A549 (cell line): ENCODE measurements at regions of chr13 and their contacts with region 1.

Region 1: DNA sequence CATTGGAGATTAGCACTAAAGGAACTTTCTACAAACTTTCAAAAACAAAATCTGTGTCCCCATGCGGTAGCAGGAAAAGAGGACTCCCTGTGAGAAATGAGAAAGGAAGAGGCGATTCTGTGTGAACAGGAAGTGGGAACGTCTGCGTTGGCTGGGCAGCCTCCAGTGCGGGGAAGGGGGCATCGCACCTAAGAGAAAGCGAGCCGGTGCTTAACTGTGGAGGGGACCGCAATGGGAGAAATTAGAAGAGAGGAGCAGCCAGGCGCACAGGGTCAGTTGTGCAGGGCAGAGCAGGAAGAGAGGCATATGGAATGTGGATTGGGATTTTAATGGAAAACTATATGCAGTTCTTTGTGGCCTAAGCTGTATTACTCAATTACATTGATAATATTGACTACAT is 77.4 kb upstream of the DOCK9 start:
- DNase-seq: no peak
- ATAC-seq: no peak
- H3K4me3 ChIP-seq: no peak overlapping the region
- H3K27ac ChIP-seq: peak overlapping the region; percentile 90 to 97
- H3K4me1 ChIP-seq: peaks cover 58% of the 10 kb centered on the region
- CTCF ChIP-seq: no peak
- EP300 ChIP-seq: no peak
- POLR2A ChIP-seq: no peak
- RAD21 ChIP-seq: no peak

Region 2: DNA sequence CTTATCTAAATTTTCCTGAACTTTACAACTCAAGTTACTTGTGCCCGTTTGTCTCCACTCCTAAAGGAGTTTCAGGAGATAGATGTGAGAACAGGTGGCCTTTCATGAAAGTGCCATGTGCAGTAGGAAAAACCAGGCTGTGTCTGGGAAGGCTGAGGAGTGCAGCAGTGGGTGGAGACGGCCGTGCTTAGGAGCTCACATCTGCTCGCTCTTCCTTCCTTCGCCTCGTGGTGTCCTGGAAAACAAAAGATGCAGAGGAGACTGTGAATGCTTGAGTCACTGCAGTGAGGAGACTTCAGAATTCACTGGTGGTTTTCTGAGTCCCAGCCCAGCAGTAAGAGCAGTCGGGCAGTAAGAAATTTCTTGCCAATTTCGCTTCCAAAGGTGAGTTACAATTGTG is 739.8 kb before region 1 on chr13:
- CTCF ChIA-PET with region 1: no interaction called
- POLR2A ChIA-PET with region 1: no interaction called
- DNase-seq: no peak
- ATAC-seq: no peak
- H3K4me3 ChIP-seq: no peak overlapping the region
- H3K27ac ChIP-seq: no peak overlapping the region
- H3K4me1 ChIP-seq: 0 out of 3 replicates have a peak, but pooled peaks cover 9% of the 10 kb centered on the region
- CTCF ChIP-seq: no peak
- EP300 ChIP-seq: no peak
- POLR2A ChIP-seq: no peak
- RAD21 ChIP-seq: no peak

Region 3: DNA sequence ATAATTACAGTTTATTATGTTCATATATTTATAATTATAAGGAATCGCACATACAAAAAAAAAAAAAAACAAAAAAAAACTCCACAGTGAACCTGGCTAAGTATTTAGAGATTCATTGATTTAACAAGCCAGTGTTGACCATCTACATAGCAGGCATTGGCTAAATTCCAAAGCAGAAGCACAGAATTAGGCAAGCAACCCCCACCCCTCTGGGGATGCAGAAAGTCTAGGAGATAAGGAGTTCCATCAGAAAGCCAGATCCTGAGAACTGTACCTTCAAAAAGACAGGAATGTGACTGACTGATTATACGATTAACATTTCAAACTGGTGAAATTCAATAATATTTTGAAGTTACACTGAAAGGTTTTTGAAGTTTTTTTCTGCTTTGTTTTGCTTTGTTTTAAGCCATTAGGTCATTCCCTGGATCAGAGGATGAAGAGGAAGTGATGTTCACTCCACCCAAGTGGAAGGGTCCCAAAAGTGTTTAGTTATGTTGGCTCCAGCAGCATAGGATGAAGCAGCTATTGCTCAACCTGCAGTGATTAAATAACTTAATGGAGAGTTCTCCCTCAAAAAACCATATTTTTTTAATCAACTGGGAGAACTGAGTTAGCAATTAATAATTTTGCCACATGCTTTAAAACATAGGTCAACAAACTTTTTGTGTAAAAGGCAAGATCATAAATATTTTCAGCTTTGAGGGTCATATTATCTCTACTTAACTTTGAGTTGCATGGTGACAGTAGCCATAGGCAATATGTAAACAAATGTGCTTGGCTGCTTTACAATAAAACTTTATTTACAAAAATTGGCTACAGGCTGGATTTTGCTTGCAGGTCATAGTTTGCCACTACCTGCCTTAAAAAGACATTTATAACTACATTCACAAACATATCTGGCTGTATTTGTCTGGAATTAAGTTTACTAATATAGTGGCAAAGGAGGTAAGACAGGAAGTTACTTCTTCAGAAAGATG is 127.0 kb before region 1 on chr13:
- CTCF ChIA-PET with region 1: no interaction called
- POLR2A ChIA-PET with region 1: no interaction called
- DNase-seq: no peak
- ATAC-seq: no peak
- H3K4me3 ChIP-seq: no peak overlapping the region
- H3K27ac ChIP-seq: no peak overlapping the region
- H3K4me1 ChIP-seq: peaks cover 8% of the 10 kb centered on the region
- CTCF ChIP-seq: no peak
- EP300 ChIP-seq: no peak
- POLR2A ChIP-seq: no peak
- RAD21 ChIP-seq: no peak

Region 4: DNA sequence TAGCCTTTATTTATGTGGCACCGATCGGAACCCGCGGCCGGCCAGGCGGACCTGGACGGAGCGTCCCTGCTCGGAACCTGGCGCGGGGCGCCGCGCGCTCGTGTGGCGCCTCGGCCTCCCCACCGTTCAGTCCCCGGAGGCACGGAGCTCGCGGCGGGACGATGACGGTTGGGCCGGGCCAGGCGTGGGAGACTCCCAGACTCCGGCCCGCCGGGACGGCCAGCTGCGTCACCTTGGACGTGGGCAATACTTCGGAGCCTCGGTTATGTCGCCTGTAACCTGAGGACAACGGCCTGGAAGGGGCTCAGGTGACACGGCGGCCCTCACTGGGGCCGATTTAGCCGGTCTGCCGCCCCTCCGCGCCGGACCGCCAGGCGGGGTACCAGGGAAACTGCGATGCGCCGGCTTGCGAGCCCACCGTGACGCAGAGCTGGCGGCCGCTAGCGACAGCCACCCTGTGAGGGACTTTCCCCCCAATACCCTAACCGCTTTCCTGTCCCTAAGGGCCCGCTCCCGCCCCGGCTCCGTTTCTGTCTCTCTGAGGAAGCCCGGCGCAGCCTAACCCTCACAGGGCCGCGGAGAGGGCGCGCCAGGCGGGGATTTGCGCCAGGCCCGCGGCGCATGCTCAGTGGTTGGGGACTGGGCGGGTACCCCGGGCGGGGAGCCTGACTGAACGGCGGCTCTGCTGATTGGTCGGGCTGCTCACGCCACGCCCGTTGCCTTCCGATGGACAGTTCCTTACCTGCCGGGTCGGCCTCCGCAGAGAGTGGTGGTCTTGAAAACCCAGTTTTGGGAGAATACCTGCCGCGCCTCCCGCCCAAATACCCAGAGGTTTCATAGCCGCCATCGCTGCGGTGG is 32.0 kb after region 1 on chr13:
- CTCF ChIA-PET with region 1: interaction called, 7 read pairs
- POLR2A ChIA-PET with region 1: interaction called, 10 read pairs
- DNase-seq: peak; percentile 86 to 93
- ATAC-seq: peak; percentile 86 to 96
- H3K4me3 ChIP-seq: peak overlapping the region; percentile 87
- H3K27ac ChIP-seq: peak overlapping the region; percentile 93 to 96
- H3K4me1 ChIP-seq: peaks cover 13% of the 10 kb centered on the region; the same call in 1 of the 3 replicates
- CTCF ChIP-seq: no peak
- EP300 ChIP-seq: no peak
- POLR2A ChIP-seq: peak; percentile 40
- RAD21 ChIP-seq: no peak

Region 5: DNA sequence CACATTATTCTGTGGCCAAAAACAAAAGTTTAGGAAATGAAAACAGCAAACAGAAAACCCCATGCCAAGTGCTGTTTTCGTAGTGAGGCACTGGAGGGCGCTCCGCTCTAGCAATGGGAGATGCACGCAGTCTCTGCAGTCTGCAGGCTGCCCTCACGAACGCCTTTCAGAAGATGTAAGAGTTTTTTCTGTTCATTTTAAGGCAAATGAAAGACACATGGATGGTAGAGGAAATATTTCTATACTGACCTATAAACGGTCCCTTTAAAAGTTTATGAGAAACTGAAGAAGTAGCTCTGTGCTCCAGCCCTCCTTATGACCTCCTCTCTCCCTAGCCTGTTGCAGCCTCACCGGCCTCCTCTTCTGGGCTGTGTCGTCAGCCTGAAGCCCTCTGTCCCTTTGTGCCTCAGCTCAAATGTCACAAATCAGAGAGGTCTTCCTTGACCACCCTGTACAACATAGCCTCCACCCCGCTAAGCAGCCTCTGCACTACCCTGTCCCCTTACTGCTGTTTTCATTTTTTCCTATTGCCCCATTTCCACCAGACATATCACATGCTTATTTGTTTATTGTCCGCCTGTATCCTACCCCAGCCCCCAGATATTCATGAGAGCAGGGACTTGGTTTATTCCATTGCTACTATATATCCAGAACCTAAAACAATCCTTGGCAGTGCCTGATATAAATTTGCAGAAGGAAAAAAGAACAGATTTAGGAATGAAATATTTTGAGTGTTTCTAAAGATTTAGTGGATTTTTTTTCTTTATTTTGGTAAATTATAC is 562.4 kb after region 1 on chr13:
- CTCF ChIA-PET with region 1: no interaction called
- POLR2A ChIA-PET with region 1: no interaction called
- DNase-seq: peak; percentile 40 to 67
- ATAC-seq: peak; percentile 82 to 89; a peak in 5 of 6 replicates
- H3K4me3 ChIP-seq: no peak overlapping the region
- H3K27ac ChIP-seq: peak overlapping the region; percentile 69 to 79
- H3K4me1 ChIP-seq: peaks cover 13% of the 10 kb centered on the region; the same call in 2 of the 3 replicates
- CTCF ChIP-seq: peak; percentile 75
- EP300 ChIP-seq: no peak
- POLR2A ChIP-seq: no peak
- RAD21 ChIP-seq: peak; percentile 85 to 92